ENCODE measurements at regions of chr3 and their contacts with region 1.

Region 1: DNA sequence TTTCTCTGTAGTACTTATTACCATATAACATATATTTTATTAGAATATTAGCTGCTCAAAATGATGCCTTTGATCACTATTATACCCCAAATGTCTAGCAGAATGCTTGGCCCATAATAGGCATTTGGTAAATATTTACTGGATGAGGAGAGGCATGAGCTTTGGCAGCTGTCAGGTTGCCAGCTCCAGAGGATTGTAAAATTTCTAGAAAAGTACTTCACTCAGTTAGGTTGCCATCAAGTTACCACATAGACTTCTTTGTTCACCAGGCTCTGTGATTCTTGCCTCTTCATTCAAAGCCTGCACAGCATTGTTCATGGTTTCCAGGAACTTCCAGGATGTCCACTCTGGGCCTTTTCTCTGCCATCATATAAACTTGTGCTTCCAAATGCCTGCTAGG is 582.8 kb downstream of the PDCD6IP start:
- DNase-seq: peak; percentile 42
- H3K4me3 ChIP-seq: no peak overlapping the region
- H3K27ac ChIP-seq: peak overlapping the region in 1 of 4 donors; percentile 28
- H3K4me1 ChIP-seq: peaks cover 0 to 24% (median 11%) of the 10 kb centered on the region in 4 donors
- H3K27me3 ChIP-seq: no peaks in the 10 kb centered on the region
- CTCF ChIP-seq: no peak
- EP300 ChIP-seq: no peak
- POLR2A ChIP-seq: no peak

Region 2: GRCh38 chr3:34207002-34207401 is 174.2 kb before region 1 on chr3:
- in situ Hi-C with region 1: no loop called
- intact Hi-C with region 1: no loop called
- DNase-seq: no peak
- H3K4me3 ChIP-seq: no peak overlapping the region
- H3K27ac ChIP-seq: peak overlapping the region in 1 of 4 donors; percentile 15
- H3K4me1 ChIP-seq: no peaks in the 10 kb centered on the region
- H3K27me3 ChIP-seq: no peaks in the 10 kb centered on the region
- CTCF ChIP-seq: no peak
- EP300 ChIP-seq: no peak
- POLR2A ChIP-seq: no peak

Region 3: DNA sequence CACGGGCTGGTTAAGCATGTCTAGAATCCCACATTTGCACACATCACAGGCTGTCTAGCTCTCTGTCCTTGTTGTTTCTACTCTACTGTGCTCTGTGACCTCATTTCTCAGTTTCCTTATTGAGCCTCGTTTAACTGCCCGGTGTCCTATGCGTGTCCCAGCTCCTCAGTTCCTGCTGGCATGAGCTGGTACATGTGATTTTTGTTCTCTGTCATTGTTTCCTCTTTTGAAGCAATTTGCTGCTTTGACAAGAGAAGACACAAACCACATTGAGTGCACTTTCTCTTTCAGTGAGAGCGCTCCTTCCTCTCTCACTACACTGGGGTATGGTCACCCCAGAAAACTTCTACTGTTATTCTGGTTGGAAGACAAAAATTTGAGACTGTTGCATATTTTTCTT is 19.3 kb before region 1 on chr3:
- in situ Hi-C with region 1: no loop called
- intact Hi-C with region 1: no loop called
- DNase-seq: peak; percentile 9
- H3K4me3 ChIP-seq: no peak overlapping the region
- H3K27ac ChIP-seq: no peak overlapping the region
- H3K4me1 ChIP-seq: peaks cover 0 to 3% (median 0%) of the 10 kb centered on the region in 4 donors
- H3K27me3 ChIP-seq: no peaks in the 10 kb centered on the region
- CTCF ChIP-seq: no peak
- EP300 ChIP-seq: no peak
- POLR2A ChIP-seq: no peak

Region 4: GRCh38 chr3:34405159-34405558 is 23.9 kb after region 1 on chr3:
- in situ Hi-C with region 1: no loop called
- intact Hi-C with region 1: loop called (anchors 1 kb)
- DNase-seq: no peak
- H3K4me3 ChIP-seq: no peak overlapping the region
- H3K27ac ChIP-seq: no peak overlapping the region
- H3K4me1 ChIP-seq: no peaks in the 10 kb centered on the region
- H3K27me3 ChIP-seq: no peaks in the 10 kb centered on the region
- CTCF ChIP-seq: no peak
- EP300 ChIP-seq: no peak
- POLR2A ChIP-seq: no peak